ENCODE measurements at regions of chr14 and their contacts with region 1.

Region 1: DNA sequence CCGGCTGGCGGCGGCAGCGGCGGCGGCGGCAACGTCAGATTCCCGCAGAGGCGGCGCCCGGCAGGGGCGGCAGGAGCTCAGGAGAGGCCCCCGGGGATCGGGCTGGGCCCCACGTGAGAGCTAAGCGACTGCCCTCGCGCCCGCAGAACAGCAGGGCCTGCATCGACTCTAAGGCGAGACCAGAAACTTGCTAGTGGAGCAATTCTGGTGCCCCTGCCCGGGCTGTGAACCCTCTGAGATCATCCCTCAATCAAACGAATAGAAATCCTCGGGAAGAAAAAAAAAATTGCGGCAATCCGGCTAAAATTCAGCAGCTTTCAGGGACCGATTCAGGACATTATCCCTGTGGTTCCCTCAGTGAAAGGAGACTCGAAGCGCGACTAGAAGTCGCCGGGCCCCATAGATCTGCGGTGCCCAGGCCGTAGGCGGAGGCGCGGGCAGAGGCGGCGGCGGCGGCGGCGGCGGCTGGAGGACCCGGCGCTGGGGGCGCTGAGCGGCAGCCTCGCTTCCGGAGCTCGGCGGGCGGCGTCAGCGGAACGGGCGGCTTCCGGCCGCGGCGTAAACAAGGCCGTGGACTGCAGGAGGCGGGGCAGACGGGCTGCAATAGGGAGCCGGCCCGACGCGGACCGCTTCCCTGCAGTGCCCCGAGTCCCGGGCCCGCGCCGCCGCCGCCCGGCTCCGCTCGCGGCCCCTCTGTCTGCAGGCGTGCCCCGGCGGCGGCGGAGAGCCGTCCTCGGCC is at the start of gene KLHDC2:
- DNase-seq: peak; percentile 94
- ATAC-seq: peak; percentile 79
- H3K4me3 Mint-ChIP-seq: peak within 1 kb of the TSS; percentile 96
- H3K27ac Mint-ChIP-seq: peak within 1 kb of the TSS; percentile 99
- H3K4me1 Mint-ChIP-seq: peaks cover 30% of the 10 kb centered on the region
- H3K27me3 Mint-ChIP-seq: no peaks in the 10 kb centered on the region
- total RNA-seq, gene KLHDC2: 16.0 to 22.4 TPM

Region 2: DNA sequence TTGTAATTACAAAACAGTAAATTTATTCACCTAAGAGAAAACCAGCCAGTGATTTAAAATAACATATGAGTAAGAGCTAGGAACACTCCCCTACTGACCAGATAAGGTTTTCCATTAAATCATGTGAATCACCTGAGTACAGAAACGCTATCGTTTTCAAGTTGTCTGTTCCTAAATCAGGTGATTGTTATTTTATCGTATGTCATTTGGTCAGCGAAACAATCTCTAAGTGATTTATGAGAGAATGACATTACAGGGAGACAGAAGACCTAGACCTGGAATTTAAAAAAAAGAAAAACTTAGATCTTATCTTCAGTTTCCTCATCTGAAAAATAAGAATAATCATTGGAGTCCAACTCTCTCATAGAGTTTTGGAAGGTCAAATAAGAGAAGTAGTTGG is 228.8 kb before region 1 on chr14:
- CTCF ChIA-PET with region 1: no interaction called
- POLR2A ChIA-PET with region 1: no interaction called
- intact Hi-C with region 1: no loop called
- DNase-seq: no peak
- ATAC-seq: no peak
- H3K4me3 Mint-ChIP-seq: no peak overlapping the region
- H3K27ac Mint-ChIP-seq: no peak overlapping the region
- H3K4me1 Mint-ChIP-seq: no peaks in the 10 kb centered on the region
- H3K27me3 Mint-ChIP-seq: peaks cover 3% of the 10 kb centered on the region

Region 3: DNA sequence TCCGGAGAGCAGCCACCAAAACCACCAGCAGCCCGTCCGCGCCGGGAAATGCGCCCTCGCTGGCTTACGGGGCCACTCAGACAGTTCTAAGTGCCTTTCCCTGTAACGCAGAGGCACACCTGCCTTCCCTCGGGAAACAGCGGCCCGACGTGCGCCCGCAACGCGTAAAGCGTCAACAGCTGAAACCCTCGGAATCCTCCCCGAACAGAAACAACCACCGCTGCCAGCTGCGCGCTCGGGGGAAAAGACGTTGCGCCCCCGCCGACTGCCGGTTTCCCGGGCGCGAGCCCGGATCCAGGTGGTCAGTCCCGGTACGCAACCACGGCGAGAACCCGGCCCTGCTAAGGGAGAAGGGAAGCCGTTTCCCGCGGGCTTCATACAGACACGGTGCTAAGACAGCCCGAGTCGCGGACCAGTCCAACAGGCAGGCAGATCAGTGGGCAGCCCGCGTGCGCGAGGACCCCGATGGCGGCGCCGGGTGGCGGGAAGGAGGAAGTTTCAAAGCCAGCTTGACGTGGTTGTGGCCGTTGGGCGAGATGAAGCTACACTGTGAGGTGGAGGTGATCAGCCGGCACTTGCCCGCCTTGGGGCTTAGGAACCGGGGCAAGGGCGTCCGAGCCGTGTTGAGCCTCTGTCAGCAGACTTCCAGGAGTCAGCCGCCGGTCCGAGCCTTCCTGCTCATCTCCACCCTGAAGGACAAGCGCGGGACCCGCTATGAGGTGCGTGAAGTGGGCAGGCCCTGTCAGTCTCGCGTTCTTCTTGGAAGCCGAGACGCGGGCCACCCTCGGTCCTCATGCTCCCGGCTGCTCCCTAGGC is 169.0 kb before region 1 on chr14 and contains the start of gene LRR1:
- CTCF ChIA-PET with region 1: interaction called, 3 read pairs
- POLR2A ChIA-PET with region 1: interaction called, 3 read pairs
- intact Hi-C with region 1: loop called in 1 of 2 experiments (anchors 1 kb)
- DNase-seq: peak; percentile 90
- ATAC-seq: peak; percentile 76
- H3K4me3 Mint-ChIP-seq: peak within 1 kb of the TSS; percentile 99
- H3K27ac Mint-ChIP-seq: peak within 1 kb of the TSS; percentile 99
- H3K4me1 Mint-ChIP-seq: peaks cover 19% of the 10 kb centered on the region
- H3K27me3 Mint-ChIP-seq: no peaks in the 10 kb centered on the region
- total RNA-seq, gene LRR1: 37.3 to 47.9 TPM

Region 4: DNA sequence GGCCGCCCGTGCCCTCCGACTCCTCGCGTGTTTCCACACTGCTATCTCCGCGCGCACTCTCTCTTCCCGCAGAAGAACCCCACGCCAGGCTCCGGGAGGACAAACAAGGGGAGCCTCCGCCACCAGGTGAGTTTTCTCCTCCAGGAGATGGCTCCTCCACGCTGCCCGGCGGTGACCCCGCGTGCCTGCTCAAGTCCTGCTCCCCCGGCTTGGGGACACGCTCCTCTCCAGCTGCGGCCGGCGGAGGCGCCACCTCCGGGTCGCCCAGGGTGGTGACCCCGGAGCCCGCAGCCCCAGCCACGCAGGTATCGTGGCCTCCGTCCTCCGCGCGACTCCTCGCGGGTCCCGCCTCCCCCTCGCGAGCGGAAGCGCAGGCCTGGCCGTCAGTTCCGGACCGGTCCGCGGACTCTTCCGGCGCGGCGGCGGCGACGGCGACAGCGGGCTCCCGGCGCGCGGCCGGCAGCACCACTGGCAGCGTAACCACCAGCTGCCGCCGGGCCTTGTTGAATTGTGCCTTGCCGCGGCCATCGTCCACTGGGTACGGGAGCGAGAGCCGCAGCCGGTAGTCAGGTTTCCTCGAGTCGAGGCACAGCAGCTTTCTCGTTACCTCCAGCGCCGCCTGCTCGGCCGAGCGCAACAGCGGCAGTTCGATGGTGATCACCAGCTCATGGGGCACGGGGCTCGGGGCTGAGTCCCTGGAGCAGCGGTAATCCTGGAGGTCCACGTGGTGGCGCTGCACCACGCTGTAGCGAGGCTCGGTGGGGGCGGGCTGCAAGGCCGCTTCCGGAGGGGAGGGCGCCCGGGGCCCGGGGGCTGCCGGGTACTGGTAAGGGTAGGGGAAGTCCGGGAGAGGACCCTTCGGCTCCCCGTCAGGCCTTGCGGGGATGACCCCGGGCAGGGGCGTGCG is 133.8 kb before region 1 on chr14:
- CTCF ChIA-PET with region 1: interaction called, 36 read pairs
- POLR2A ChIA-PET with region 1: interaction called, 3 read pairs
- intact Hi-C with region 1: loop called (anchors 1 kb)
- DNase-seq: peak; percentile 98
- ATAC-seq: peak; percentile 88
- H3K4me3 Mint-ChIP-seq: peak overlapping the region; percentile 98
- H3K27ac Mint-ChIP-seq: peak overlapping the region; percentile 95
- H3K4me1 Mint-ChIP-seq: peaks cover 46% of the 10 kb centered on the region
- H3K27me3 Mint-ChIP-seq: no peaks in the 10 kb centered on the region

Region 5: GRCh38 chr14:49727171-49727570 is 40.6 kb before region 1 on chr14:
- CTCF ChIA-PET with region 1: no interaction called
- POLR2A ChIA-PET with region 1: interaction called, 17 read pairs
- intact Hi-C with region 1: no loop called
- DNase-seq: no peak
- ATAC-seq: no peak
- H3K4me3 Mint-ChIP-seq: no peak overlapping the region
- H3K27ac Mint-ChIP-seq: no peak overlapping the region
- H3K4me1 Mint-ChIP-seq: no peaks in the 10 kb centered on the region
- H3K27me3 Mint-ChIP-seq: no peaks in the 10 kb centered on the region

Region 6: DNA sequence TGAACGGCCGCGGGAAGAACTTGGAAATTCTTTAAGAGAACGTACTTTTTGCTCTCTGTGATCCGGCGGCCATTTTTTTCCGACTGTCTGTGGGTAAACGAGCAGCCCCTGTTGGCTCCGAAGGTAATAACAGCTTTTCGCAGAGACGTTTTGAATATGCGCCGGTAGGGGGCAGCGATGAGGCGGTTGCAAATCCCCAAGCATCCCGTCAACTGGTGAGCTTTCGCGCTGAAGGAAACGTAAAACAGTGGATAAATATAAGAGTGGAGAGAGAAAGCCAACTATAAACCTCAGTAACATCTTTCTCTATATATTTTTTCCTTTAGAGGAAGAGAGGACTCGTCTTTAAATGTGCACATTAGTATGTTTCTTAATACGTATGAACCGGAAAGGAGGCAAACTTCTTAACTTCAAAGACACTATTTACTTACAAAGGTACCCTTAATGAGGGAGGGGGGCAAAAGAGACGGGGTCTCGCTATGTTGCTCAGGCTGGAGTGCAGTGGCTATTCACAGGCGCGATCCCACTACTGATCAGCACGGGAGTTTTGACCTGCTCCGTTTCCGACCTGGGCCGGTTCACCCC is 94.5 kb after region 1 on chr14:
- CTCF ChIA-PET with region 1: interaction called, 6 read pairs
- POLR2A ChIA-PET with region 1: interaction called, 12 read pairs
- intact Hi-C with region 1: loop called in 1 of 2 experiments (anchors 1 kb)
- DNase-seq: peak; percentile 92
- ATAC-seq: peak; percentile 13
- H3K4me3 Mint-ChIP-seq: no peak overlapping the region
- H3K27ac Mint-ChIP-seq: no peak overlapping the region
- H3K4me1 Mint-ChIP-seq: peaks cover 20% of the 10 kb centered on the region
- H3K27me3 Mint-ChIP-seq: no peaks in the 10 kb centered on the region

Region 7: GRCh38 chr14:49962621-49963020 is 194.9 kb after region 1 on chr14:
- CTCF ChIA-PET with region 1: no interaction called
- POLR2A ChIA-PET with region 1: no interaction called
- intact Hi-C with region 1: no loop called
- DNase-seq: peak; percentile 88
- ATAC-seq: peak; percentile 83
- H3K4me3 Mint-ChIP-seq: no peak overlapping the region
- H3K27ac Mint-ChIP-seq: peak overlapping the region; percentile 61
- H3K4me1 Mint-ChIP-seq: peaks cover 44% of the 10 kb centered on the region
- H3K27me3 Mint-ChIP-seq: no peaks in the 10 kb centered on the region

Region 8: GRCh38 chr14:50116181-50116956 is 348.6 kb after region 1 on chr14 and contains the start of gene VCPKMT:
- CTCF ChIA-PET with region 1: no interaction called
- POLR2A ChIA-PET with region 1: interaction called, 3 read pairs
- intact Hi-C with region 1: loop called (anchors 1 to 10 kb)
- DNase-seq: peak; percentile 98
- ATAC-seq: peak; percentile 99
- H3K4me3 Mint-ChIP-seq: peak within 1 kb of the TSS; percentile 95
- H3K27ac Mint-ChIP-seq: peak within 1 kb of the TSS; percentile 97
- H3K4me1 Mint-ChIP-seq: peaks cover 25% of the 10 kb centered on the region
- H3K27me3 Mint-ChIP-seq: no peaks in the 10 kb centered on the region
- total RNA-seq, gene VCPKMT: 6.6 to 10.4 TPM

Region 9: DNA sequence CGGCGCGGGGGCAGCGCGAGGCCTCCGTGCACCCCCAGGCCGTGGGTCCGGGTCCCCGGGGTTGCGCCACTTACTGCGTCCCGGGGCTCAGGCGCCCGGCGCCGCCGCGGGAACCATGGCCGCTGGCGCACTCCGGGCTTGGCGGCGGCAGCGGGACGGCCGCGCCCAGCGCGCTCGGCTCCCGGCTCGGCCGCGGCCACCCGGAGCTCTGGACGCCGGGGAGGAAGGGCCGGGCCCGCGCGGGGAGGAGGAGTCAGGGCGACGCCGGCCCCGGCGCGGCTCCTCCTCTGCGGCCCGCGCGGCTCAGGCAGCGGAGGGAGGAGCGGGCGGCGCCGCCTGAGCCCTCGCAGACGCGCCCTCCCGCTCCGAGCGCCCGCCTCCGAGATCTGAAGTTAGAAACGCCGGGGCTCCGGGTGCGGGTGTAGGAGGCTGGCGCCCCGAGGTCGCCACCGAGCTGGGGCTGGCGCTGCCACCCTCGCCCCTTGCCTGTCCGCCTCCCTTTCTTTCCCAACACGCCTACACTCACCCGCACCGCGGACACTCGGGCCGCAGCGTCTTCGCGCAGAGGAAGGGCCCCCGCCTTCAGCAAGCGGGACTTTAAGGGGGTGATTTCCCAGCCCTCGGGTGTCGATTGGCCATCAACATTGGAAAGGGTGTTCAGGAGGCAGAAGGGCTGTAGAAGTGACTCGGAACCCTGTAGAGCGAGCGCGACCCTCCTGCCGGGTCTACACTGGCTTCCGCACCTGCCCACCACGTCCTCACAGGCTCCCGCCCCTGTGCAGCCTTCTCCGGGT is 1063.4 kb after region 1 on chr14 and contains the start of gene NIN:
- CTCF ChIA-PET with region 1: no interaction called
- POLR2A ChIA-PET with region 1: no interaction called
- intact Hi-C with region 1: loop called in 1 of 2 experiments (anchors 2 kb)
- DNase-seq: peak; percentile 84
- ATAC-seq: peak; percentile 89
- H3K4me3 Mint-ChIP-seq: peak within 1 kb of the TSS; percentile 91
- H3K27ac Mint-ChIP-seq: peak within 1 kb of the TSS; percentile 88
- H3K4me1 Mint-ChIP-seq: peaks cover 56% of the 10 kb centered on the region
- H3K27me3 Mint-ChIP-seq: peaks cover 6% of the 10 kb centered on the region
- total RNA-seq, gene NIN: 47.5 to 53.8 TPM